ENCODE measurements at regions of chr2 and their contacts with region 1.

Region 1: DNA sequence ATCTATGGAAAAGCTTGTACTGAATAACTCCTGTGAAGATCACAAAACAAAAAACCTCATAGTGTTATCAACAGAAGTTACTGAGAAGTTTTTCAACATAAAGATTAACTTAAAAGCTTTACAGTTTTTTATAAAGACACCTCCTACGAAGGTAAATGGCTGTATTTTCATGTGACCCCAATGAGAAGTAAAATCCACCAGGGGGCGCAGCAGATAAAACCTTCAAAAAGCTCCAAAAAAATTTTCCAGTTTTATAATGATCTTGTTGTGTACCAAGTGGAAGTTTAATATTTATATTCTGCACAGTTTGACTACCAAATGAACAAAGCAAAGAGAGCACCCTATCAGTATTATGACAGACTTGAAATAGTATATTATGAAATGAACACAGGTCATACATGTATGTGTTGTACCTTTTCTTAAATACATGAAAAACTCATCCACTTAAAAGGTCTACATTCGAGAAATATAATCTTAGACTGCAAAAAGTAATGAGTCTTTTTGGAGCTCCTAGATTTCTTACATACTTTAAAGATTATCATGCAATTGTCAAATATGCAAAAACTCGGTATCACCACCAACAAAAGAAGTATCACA is 38.5 kb downstream of the PNO1 start:
- DNase-seq: peak in 1 of 2 experiments; percentile 34
- H3K4me3 ChIP-seq: no peak overlapping the region
- H3K4me3 Mint-ChIP-seq: no peak overlapping the region
- H3K27ac Mint-ChIP-seq: no peak overlapping the region
- H3K4me1 ChIP-seq: no peaks in the 10 kb centered on the region
- H3K4me1 Mint-ChIP-seq: peaks cover 17% of the 10 kb centered on the region
- H3K27me3 ChIP-seq: no peaks in the 10 kb centered on the region
- H3K27me3 Mint-ChIP-seq: no peaks in the 10 kb centered on the region
- CTCF ChIP-seq: peak; percentile 51 to 52

Region 2: DNA sequence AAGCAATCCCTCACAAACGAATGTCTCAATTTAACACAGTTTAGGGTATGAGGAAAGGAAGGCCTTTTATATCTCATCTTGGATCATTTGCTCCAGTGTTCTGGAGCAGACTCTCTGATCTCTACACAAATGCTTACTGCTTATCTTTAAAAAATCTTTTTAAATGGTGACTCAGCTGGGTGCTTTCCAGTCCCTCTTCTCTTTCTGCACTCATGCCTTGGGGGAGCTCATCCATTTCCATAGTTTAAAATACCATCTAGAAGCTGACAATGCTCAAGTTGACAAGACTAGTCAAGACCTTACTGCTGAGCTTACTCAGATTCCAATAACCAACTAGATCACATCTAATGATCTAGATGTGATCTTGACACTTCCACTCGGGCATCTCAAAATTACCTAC is 742.9 kb before region 1 on chr2:
- CTCF ChIA-PET with region 1: no interaction called
- POLR2A ChIA-PET with region 1: no interaction called
- intact Hi-C with region 1: no loop called
- DNase-seq: no peak
- H3K4me3 ChIP-seq: no peak overlapping the region
- H3K4me3 Mint-ChIP-seq: no peak overlapping the region
- H3K27ac Mint-ChIP-seq: no peak overlapping the region
- H3K4me1 ChIP-seq: peaks cover 18% of the 10 kb centered on the region
- H3K4me1 Mint-ChIP-seq: peaks cover 22% of the 10 kb centered on the region
- H3K27me3 ChIP-seq: no peaks in the 10 kb centered on the region
- H3K27me3 Mint-ChIP-seq: no peaks in the 10 kb centered on the region
- CTCF ChIP-seq: no peak

Region 3: DNA sequence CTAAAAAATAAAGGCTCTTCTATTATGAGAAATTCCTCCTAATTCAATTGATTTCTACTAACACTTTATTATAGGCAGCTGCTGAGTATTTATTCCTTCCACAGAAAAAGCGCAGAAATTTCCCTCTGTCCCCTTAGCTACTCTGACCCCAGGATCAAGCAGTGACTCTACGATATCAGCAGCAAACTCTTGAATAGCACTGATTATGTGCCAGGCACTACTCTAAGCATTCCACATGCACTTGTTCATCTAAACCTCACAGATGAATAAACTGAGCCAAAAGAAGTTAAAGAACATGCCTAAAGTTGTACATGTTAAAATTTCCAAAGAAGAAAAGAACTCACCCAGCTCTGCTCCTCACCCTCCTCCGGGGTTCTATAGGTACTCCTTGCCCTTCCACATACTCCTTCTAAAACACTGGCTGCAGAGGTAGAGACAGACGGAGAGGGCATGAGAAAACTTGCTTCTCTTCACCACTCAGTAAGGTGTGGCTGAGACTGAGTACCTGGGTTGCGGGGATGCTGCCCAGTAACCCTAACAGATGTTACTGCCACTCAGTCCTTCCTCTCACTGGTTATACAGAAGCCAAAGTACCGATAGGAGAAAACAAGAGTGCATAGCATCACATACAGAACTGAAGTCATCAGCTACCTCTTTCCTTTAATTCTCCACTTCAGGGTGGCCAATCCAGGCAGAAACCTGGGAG is 143.3 kb before region 1 on chr2:
- CTCF ChIA-PET with region 1: no interaction called
- POLR2A ChIA-PET with region 1: no interaction called
- intact Hi-C with region 1: no loop called
- DNase-seq: no peak
- H3K4me3 ChIP-seq: no peak overlapping the region
- H3K4me3 Mint-ChIP-seq: no peak overlapping the region
- H3K27ac Mint-ChIP-seq: no peak overlapping the region
- H3K4me1 ChIP-seq: no peaks in the 10 kb centered on the region
- H3K4me1 Mint-ChIP-seq: no peaks in the 10 kb centered on the region
- H3K27me3 ChIP-seq: no peaks in the 10 kb centered on the region
- H3K27me3 Mint-ChIP-seq: no peaks in the 10 kb centered on the region
- CTCF ChIP-seq: no peak

Region 4: DNA sequence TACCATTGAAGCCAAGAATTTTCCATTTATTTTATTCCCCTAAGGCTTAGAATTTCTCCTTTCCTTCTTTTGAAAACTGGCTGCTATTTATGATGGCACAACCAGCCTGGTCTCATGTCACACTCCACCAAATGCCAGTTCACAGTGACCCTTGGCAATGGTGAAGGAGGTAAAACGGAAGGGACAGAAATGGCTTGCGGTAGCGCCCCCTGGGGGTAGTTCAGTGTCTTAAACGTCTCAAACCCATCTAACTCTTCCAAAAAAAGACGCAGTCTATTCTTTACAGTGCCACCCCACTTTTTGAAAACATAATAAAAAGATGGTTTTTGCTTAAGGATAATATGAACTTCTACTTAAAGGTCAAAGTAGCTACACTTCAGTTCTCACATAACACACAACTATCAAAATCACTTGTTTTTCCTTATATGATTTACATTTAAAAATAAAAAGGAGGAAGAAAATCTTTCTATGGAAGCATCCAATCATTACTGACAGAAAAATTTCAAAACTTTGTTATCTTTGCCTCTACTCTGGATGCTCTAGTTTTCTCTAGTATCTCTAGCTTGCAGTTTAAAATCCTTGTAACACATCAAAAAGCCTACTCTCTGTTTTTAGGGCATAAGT is 10.6 kb before region 1 on chr2:
- CTCF ChIA-PET with region 1: interaction called, 3 read pairs
- POLR2A ChIA-PET with region 1: no interaction called
- intact Hi-C with region 1: loop called (anchors 1 kb)
- DNase-seq: peak; percentile 58 to 73
- H3K4me3 ChIP-seq: no peak overlapping the region
- H3K4me3 Mint-ChIP-seq: no peak overlapping the region
- H3K27ac Mint-ChIP-seq: no peak overlapping the region
- H3K4me1 ChIP-seq: no peaks in the 10 kb centered on the region
- H3K4me1 Mint-ChIP-seq: no peaks in the 10 kb centered on the region
- H3K27me3 ChIP-seq: no peaks in the 10 kb centered on the region
- H3K27me3 Mint-ChIP-seq: no peaks in the 10 kb centered on the region
- CTCF ChIP-seq: peak; percentile 73 to 84

Region 5: DNA sequence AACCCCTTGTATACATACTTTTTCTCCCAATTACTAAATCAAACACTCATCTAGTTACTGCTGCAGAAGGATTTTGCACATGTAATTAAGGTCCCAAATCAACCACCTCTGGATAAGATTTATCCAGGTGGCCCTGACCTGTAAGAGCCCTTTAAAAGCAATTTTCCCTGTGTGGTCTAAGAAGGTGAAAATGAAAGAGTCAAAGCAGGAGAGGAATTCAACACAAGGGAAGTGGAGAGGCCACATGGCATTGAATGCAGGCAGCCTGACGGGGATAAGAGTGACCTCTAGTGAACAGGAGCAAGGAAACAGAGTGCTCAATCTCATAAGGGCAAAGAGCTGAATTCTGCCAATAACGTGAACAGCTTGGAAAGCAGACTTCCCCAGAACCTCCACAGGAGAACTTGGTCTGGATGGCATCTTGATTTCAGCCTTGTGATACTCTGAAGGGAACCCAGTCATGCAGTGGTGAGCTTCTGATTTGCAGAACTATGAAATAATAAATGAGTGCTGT is 29.0 kb after region 1 on chr2:
- CTCF ChIA-PET with region 1: interaction called, 4 read pairs
- POLR2A ChIA-PET with region 1: no interaction called
- intact Hi-C with region 1: loop called (anchors 1 kb)
- DNase-seq: peak; percentile 46 to 63
- H3K4me3 ChIP-seq: no peak overlapping the region
- H3K4me3 Mint-ChIP-seq: no peak overlapping the region
- H3K27ac Mint-ChIP-seq: no peak overlapping the region
- H3K4me1 ChIP-seq: 0 out of 2 replicates have a peak, but pooled peaks cover under 1% of the 10 kb centered on the region
- H3K4me1 Mint-ChIP-seq: peaks cover 18% of the 10 kb centered on the region
- H3K27me3 ChIP-seq: no peaks in the 10 kb centered on the region
- H3K27me3 Mint-ChIP-seq: no peaks in the 10 kb centered on the region
- CTCF ChIP-seq: peak; percentile 26 to 34

Region 6: GRCh38 chr2:68237404-68237803 is 41.2 kb after region 1 on chr2:
- CTCF ChIA-PET with region 1: no interaction called
- POLR2A ChIA-PET with region 1: no interaction called
- intact Hi-C with region 1: no loop called
- DNase-seq: no peak
- H3K4me3 ChIP-seq: no peak overlapping the region
- H3K4me3 Mint-ChIP-seq: no peak overlapping the region
- H3K27ac Mint-ChIP-seq: no peak overlapping the region
- H3K4me1 ChIP-seq: no peaks in the 10 kb centered on the region
- H3K4me1 Mint-ChIP-seq: peaks cover 22% of the 10 kb centered on the region
- H3K27me3 ChIP-seq: no peaks in the 10 kb centered on the region
- H3K27me3 Mint-ChIP-seq: no peaks in the 10 kb centered on the region
- CTCF ChIP-seq: no peak

Region 7: DNA sequence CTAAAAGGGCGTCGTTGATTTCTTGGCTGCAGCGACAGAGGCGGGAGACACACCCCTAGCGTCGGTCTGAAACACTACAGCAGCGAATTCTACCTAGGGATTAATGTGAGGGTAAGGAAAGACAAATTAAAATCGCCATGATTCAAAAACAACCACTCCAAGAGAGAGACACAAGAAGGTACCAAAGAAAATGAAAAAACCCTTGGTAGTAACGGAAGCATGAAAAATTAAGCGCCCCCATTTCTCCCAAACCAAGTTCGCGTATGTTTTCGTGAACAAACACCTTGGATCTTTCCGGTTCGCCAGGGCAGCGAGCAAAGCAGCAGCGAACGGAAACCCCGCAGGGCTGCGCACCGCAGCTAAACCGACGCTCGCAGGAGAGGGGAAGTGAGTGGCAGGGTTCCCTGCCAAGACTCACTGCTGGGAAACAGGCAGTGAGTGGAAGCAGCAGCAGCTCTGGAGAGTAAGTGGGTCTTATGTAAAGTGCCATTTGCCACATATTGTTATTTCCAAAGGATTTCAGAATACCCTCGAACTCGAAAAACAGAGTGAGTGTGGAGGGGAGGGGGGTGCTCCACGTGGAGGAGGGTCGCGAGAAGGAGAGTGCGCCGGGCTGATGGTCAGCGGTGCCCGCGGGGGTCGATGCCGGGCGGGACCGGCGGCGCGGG is 55.1 kb after region 1 on chr2:
- CTCF ChIA-PET with region 1: interaction called, 3 read pairs
- POLR2A ChIA-PET with region 1: no interaction called
- intact Hi-C with region 1: loop called (anchors 5 kb)
- DNase-seq: peak; percentile 79 to 80
- H3K4me3 ChIP-seq: peak overlapping the region; percentile 99
- H3K4me3 Mint-ChIP-seq: peak overlapping the region; percentile 92
- H3K27ac Mint-ChIP-seq: peak overlapping the region; percentile 97
- H3K4me1 ChIP-seq: 0 out of 2 replicates have a peak, but pooled peaks cover 17% of the 10 kb centered on the region
- H3K4me1 Mint-ChIP-seq: peaks cover 14% of the 10 kb centered on the region
- H3K27me3 ChIP-seq: no peaks in the 10 kb centered on the region
- H3K27me3 Mint-ChIP-seq: no peaks in the 10 kb centered on the region
- CTCF ChIP-seq: peak; percentile 64 to 72